Panc1 (cell line): ENCODE measurements at regions of chr2 and their contacts with region 1.

Region 1: DNA sequence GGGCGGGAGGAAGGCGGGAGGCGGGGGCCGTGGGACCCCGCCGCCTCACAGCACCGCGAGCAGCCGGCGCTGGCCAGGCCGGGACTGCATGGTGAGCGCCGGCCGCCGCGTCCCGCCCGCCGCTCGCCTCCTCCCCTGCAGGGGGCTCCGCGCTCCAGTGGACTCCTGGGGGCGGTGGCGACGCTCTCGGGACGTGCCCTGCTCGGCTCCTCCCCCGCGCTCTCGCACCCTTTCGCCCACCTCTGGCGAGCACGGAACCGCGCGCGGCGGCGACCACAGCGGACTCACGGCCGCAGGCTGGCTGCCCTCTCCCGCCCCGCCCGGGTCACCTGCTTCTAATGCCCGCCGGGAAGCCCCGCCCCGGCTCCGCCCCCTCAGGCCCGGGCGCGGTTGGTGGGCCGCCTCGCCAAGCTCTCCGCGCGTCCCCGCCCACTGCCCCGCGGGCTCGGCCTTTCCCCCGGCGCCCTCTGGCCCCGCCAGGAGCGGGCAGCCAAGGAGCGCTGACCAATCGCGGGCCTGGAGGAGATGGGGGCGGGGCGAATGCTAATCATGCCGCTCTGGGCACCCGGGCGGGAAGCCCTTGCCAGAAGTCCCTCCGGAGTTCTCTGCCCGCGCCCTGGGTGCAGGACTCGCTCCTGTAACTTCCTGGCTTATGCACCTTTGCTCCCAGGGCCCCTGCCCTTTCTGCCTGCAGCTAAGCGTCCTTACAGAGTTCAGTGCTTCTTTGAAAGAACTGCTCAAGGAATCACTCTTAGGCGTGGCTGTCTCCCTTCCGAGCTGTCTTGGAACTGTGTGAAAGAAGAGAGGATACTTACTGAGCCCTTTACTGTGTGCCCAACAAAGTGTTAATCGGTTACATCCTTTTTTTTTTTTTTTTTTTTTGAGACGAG is at the start of gene FZD5:
- DNase-seq: peak; percentile 67
- ATAC-seq: peak; percentile 90
- H3K4me3 ChIP-seq: peak within 1 kb of the TSS; percentile 84
- H3K27ac ChIP-seq: peak within 1 kb of the TSS; percentile 79
- H3K4me1 ChIP-seq: peaks cover 10% of the 10 kb centered on the region
- H3K27me3 ChIP-seq: no peaks in the 10 kb centered on the region
- CTCF ChIP-seq: peak; percentile 75; the same call in 1 of the 2 replicates
- total RNA-seq, gene FZD5: 9.4 TPM

Region 2: GRCh38 chr2:207807516-207807915 is 37.7 kb after region 1 on chr2:
- CTCF ChIA-PET with region 1: no interaction called
- POLR2A ChIA-PET with region 1: interaction called, 11 read pairs
- in situ Hi-C with region 1: no loop called
- intact Hi-C with region 1: no loop called
- DNase-seq: no peak
- ATAC-seq: no peak
- H3K4me3 ChIP-seq: no peak overlapping the region
- H3K27ac ChIP-seq: no peak overlapping the region
- H3K4me1 ChIP-seq: peaks cover 5% of the 10 kb centered on the region
- H3K27me3 ChIP-seq: no peaks in the 10 kb centered on the region
- CTCF ChIP-seq: no peak

Region 3: GRCh38 chr2:207974216-207974605 is 204.4 kb after region 1 on chr2:
- CTCF ChIA-PET with region 1: no interaction called
- POLR2A ChIA-PET with region 1: no interaction called
- in situ Hi-C with region 1: no loop called
- intact Hi-C with region 1: loop called (anchors 2 kb)
- DNase-seq: no peak
- ATAC-seq: no peak
- H3K4me3 ChIP-seq: no peak overlapping the region
- H3K27ac ChIP-seq: no peak overlapping the region
- H3K4me1 ChIP-seq: no peaks in the 10 kb centered on the region
- H3K27me3 ChIP-seq: no peaks in the 10 kb centered on the region; the same call in 1 of the 2 replicates
- CTCF ChIP-seq: no peak

Region 4: GRCh38 chr2:208033758-208034502 is 264.1 kb after region 1 on chr2:
- CTCF ChIA-PET with region 1: no interaction called
- POLR2A ChIA-PET with region 1: no interaction called
- in situ Hi-C with region 1: no loop called
- intact Hi-C with region 1: loop called (anchors 5 kb)
- DNase-seq: no peak
- ATAC-seq: peak; percentile 84
- H3K4me3 ChIP-seq: no peak overlapping the region
- H3K27ac ChIP-seq: no peak overlapping the region
- H3K4me1 ChIP-seq: no peaks in the 10 kb centered on the region
- H3K27me3 ChIP-seq: no peaks in the 10 kb centered on the region
- CTCF ChIP-seq: peak; percentile 70

Region 5: DNA sequence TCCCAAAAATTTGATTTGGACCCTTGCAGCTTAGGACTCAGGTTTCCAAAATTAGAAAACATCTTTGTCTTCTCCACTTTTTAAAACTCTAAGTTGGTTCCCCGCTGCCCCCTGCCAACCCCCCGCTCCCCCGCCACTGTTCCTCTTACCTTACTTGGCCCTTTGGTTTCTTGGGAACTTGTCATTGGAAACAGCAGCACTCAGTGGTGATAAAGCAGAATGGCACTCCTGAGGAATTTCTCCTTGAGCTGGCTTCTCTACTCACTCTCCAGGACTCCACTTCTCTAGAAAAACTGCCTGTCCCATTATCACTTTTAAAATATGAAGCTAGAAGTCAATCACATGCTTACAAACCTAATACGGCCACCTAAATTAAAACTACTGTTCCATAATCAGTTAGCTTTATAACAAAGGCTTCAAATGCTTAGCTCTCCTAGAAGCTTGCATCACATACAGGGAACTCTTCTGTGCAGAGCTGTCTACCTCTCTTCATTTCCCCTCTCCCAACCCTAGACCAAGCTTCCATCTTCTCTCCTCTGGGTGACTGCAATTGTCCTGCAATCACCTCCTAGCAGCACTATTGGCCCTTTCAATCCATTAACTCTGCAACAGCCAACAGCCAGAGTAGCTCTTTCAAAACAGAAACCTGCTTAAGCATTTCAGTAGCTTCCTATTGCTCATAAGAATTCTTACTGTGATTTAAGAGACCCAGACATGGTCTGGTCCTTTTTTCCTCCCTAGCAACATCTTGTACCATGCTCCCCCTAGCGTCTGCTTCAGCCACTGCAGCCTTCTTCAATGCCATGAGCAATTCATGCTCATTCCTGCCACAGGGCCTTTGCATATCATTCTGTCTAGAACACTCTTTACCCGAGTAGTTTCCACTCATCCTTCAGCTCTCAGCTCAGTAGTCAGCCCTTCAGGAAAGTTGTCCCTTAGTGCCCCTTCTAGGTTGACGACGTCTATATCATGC is 270.6 kb after region 1 on chr2:
- CTCF ChIA-PET with region 1: interaction called, 10 read pairs
- POLR2A ChIA-PET with region 1: no interaction called
- in situ Hi-C with region 1: no loop called
- intact Hi-C with region 1: no loop called
- DNase-seq: no peak
- ATAC-seq: peak; percentile 82
- H3K4me3 ChIP-seq: no peak overlapping the region
- H3K27ac ChIP-seq: no peak overlapping the region
- H3K4me1 ChIP-seq: no peaks in the 10 kb centered on the region; the same call in 1 of the 2 replicates
- H3K27me3 ChIP-seq: no peaks in the 10 kb centered on the region
- CTCF ChIP-seq: peak; percentile 78

Region 6: GRCh38 chr2:208072250-208072892 is 302.5 kb after region 1 on chr2:
- CTCF ChIA-PET with region 1: interaction called, 3 read pairs
- POLR2A ChIA-PET with region 1: no interaction called
- in situ Hi-C with region 1: no loop called
- intact Hi-C with region 1: loop called (anchors 5 kb)
- DNase-seq: peak; percentile 70
- ATAC-seq: peak; percentile 96
- H3K4me3 ChIP-seq: no peak overlapping the region
- H3K27ac ChIP-seq: no peak overlapping the region
- H3K4me1 ChIP-seq: no peaks in the 10 kb centered on the region
- H3K27me3 ChIP-seq: no peaks in the 10 kb centered on the region; the same call in 1 of the 2 replicates
- CTCF ChIP-seq: peak; percentile 92

Region 7: DNA sequence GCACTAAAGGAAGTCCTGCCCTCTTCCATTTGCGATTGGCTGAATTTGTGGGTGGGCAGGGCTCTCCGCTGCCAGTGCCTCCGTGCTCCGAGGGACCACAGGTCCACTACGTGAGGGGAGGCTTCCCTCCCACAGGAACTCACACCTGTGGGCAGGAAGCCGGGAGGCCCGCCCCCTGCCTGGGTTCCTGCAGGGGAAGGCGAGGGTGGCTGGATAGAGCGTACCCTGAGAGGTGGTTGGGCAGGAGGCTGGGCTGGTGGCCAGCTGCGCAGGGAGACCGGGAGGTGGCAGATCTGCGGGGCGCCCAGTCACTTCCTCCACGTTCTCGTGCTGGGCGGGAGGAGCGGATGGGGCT is 589.8 kb after region 1 on chr2:
- CTCF ChIA-PET with region 1: no interaction called
- POLR2A ChIA-PET with region 1: no interaction called
- in situ Hi-C with region 1: no loop called
- intact Hi-C with region 1: no loop called
- DNase-seq: no peak
- ATAC-seq: no peak
- H3K4me3 ChIP-seq: peak overlapping the region in 1 of 2 experiments; percentile 10; a peak in 1 of 4 replicates
- H3K27ac ChIP-seq: no peak overlapping the region
- H3K4me1 ChIP-seq: no peaks in the 10 kb centered on the region
- H3K27me3 ChIP-seq: no peaks in the 10 kb centered on the region
- CTCF ChIP-seq: no peak